ENCODE measurements at regions of chr9 and their contacts with region 1.

Region 1: GRCh38 chr9:137445275-137445807 is 4.2 kb upstream of the ENTPD8 start:
- DNase-seq: peak; percentile 94
- H3K4me3 Mint-ChIP-seq: no peak overlapping the region
- H3K27ac Mint-ChIP-seq: no peak overlapping the region
- H3K4me1 Mint-ChIP-seq: peaks cover 13% of the 10 kb centered on the region
- H3K27me3 Mint-ChIP-seq: peaks cover 5% of the 10 kb centered on the region

Region 2: GRCh38 chr9:137294091-137294683 is 151.2 kb before region 1 on chr9:
- CTCF ChIA-PET with region 1: no interaction called
- intact Hi-C with region 1: loop called (anchors 1 kb)
- DNase-seq: peak; percentile 37
- H3K4me3 Mint-ChIP-seq: peak overlapping the region; percentile 9
- H3K27ac Mint-ChIP-seq: no peak overlapping the region
- H3K4me1 Mint-ChIP-seq: peaks cover 8% of the 10 kb centered on the region
- H3K27me3 Mint-ChIP-seq: peaks cover 20% of the 10 kb centered on the region

Region 3: GRCh38 chr9:137423004-137423874 is 22.1 kb before region 1 on chr9 and contains the starts of genes EXD3 and NOXA1:
- CTCF ChIA-PET with region 1: interaction called, 7 read pairs
- intact Hi-C with region 1: loop called (anchors 1 kb)
- DNase-seq: peak; percentile 96
- H3K4me3 Mint-ChIP-seq: peak within 1 kb of the TSS; percentile 77
- H3K27ac Mint-ChIP-seq: peak within 1 kb of the TSS; percentile 13
- H3K4me1 Mint-ChIP-seq: peaks cover 16% of the 10 kb centered on the region
- H3K27me3 Mint-ChIP-seq: no peaks in the 10 kb centered on the region
- total RNA-seq, gene EXD3: 11.2 to 12.7 TPM
- total RNA-seq, gene NOXA1: 1.0 to 1.2 TPM